Activated CD8-positive, alpha-beta T cell treated with anti-CD3 and anti-CD28 coated beads for 36 hours (primary cell): ENCODE measurements at regions of chr15 and their contacts with region 1.

Region 1: GRCh38 chr15:60520825-60521368 is 42.0 kb upstream of the ICE2 start:
- DNase-seq: peak; percentile 92
- ATAC-seq: peak; percentile 74
- H3K4me3 Mint-ChIP-seq: no peak overlapping the region
- H3K27ac Mint-ChIP-seq: peak overlapping the region; percentile 83
- H3K4me1 Mint-ChIP-seq: peaks cover 53% of the 10 kb centered on the region
- H3K27me3 Mint-ChIP-seq: no peaks in the 10 kb centered on the region
- CTCF ChIP-seq: peak; percentile 92

Region 2: DNA sequence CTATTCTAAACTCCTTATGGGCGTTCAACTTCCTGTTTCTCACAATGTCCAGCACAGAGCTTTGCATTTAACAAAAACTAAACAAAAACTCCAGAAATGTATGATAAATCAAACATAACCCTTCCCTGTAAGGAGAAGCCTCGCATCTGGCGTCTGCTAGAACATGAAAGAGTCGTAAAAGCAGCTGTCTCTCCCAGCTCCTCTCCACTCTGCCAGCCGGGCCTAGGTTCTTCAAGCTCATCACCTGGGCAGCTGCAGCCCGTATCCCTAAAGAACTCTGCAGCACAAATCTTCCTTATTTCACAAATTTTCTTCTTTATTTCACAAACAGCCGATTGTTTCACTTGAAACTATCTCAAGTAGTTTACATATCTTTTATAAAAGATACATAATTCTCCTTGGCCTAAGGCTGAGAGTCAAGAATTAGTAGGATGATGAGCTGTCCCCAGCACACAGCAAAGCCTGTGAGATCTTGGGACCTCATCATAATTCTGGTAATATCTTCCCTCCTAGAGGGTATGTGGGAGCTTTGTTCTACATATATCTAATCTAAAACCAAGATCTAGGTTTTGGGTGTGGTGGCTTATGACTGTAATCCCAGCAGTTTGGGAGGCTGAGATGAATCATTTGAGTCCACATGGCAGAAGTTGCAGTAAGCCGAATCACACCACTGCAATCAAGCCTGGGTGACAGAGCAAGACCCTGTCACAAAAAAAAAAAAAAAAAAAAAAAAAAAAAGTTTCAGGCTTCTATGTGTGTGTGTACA is 158.4 kb before region 1 on chr15:
- CTCF ChIA-PET with region 1: interaction called, 66 read pairs
- POLR2A ChIA-PET with region 1: no interaction called
- intact Hi-C with region 1: loop called (anchors 5 kb)
- DNase-seq: peak; percentile 49
- ATAC-seq: peak; percentile 87
- H3K4me3 Mint-ChIP-seq: no peak overlapping the region
- H3K27ac Mint-ChIP-seq: no peak overlapping the region
- H3K4me1 Mint-ChIP-seq: peaks cover 11% of the 10 kb centered on the region
- H3K27me3 Mint-ChIP-seq: no peaks in the 10 kb centered on the region
- CTCF ChIP-seq: no peak

Region 3: GRCh38 chr15:60496853-60497252 is 24.0 kb before region 1 on chr15:
- CTCF ChIA-PET with region 1: interaction called, 22 read pairs
- POLR2A ChIA-PET with region 1: no interaction called
- intact Hi-C with region 1: no loop called
- DNase-seq: no peak
- ATAC-seq: no peak
- H3K4me3 Mint-ChIP-seq: no peak overlapping the region
- H3K27ac Mint-ChIP-seq: no peak overlapping the region
- H3K4me1 Mint-ChIP-seq: peaks cover 4% of the 10 kb centered on the region
- H3K27me3 Mint-ChIP-seq: no peaks in the 10 kb centered on the region
- CTCF ChIP-seq: no peak

Region 4: GRCh38 chr15:60541481-60542299 is 20.8 kb after region 1 on chr15:
- CTCF ChIA-PET with region 1: interaction called, 68 read pairs
- POLR2A ChIA-PET with region 1: interaction called, 6 read pairs
- intact Hi-C with region 1: no loop called
- DNase-seq: peak; percentile 28
- ATAC-seq: peak; percentile 22
- H3K4me3 Mint-ChIP-seq: no peak overlapping the region
- H3K27ac Mint-ChIP-seq: peak overlapping the region; percentile 87
- H3K4me1 Mint-ChIP-seq: peaks cover 93% of the 10 kb centered on the region
- H3K27me3 Mint-ChIP-seq: no peaks in the 10 kb centered on the region
- CTCF ChIP-seq: no peak

Region 5: GRCh38 chr15:60563066-60563465 is 42.2 kb after region 1 on chr15:
- CTCF ChIA-PET with region 1: interaction called, 34 read pairs
- POLR2A ChIA-PET with region 1: no interaction called
- intact Hi-C with region 1: no loop called
- DNase-seq: no peak
- ATAC-seq: no peak
- H3K4me3 Mint-ChIP-seq: no peak overlapping the region
- H3K27ac Mint-ChIP-seq: peak overlapping the region; percentile 72
- H3K4me1 Mint-ChIP-seq: peaks cover 72% of the 10 kb centered on the region
- H3K27me3 Mint-ChIP-seq: no peaks in the 10 kb centered on the region
- CTCF ChIP-seq: no peak

Region 6: GRCh38 chr15:60573936-60574335 is 53.0 kb after region 1 on chr15:
- CTCF ChIA-PET with region 1: interaction called, 34 read pairs
- POLR2A ChIA-PET with region 1: interaction called, 6 read pairs
- intact Hi-C with region 1: no loop called
- DNase-seq: peak; percentile 64
- ATAC-seq: peak; percentile 66
- H3K4me3 Mint-ChIP-seq: peak overlapping the region; percentile 42
- H3K27ac Mint-ChIP-seq: peak overlapping the region; percentile 91
- H3K4me1 Mint-ChIP-seq: peaks cover 84% of the 10 kb centered on the region
- H3K27me3 Mint-ChIP-seq: no peaks in the 10 kb centered on the region
- CTCF ChIP-seq: no peak

Region 7: GRCh38 chr15:60916679-60917460 is 396.0 kb after region 1 on chr15:
- CTCF ChIA-PET with region 1: interaction called, 10 read pairs
- POLR2A ChIA-PET with region 1: no interaction called
- intact Hi-C with region 1: no loop called
- DNase-seq: peak; percentile 95
- ATAC-seq: peak; percentile 95
- H3K4me3 Mint-ChIP-seq: no peak overlapping the region
- H3K27ac Mint-ChIP-seq: no peak overlapping the region
- H3K4me1 Mint-ChIP-seq: peaks cover 9% of the 10 kb centered on the region
- H3K27me3 Mint-ChIP-seq: no peaks in the 10 kb centered on the region
- CTCF ChIP-seq: peak; percentile 86